Breast epithelium (tissue), 4 donors: ENCODE measurements at regions of chr1 and their contacts with region 1.

Region 1: GRCh38 chr1:13714851-13715250 is 14.9 kb downstream of the PRDM2 start:
- DNase-seq: no peak
- H3K4me3 ChIP-seq: no peak overlapping the region
- H3K27ac ChIP-seq: peak overlapping the region in 1 of 2 donors; percentile 9
- H3K4me1 ChIP-seq: no peaks in the 10 kb centered on the region
- H3K27me3 ChIP-seq: no peaks in the 10 kb centered on the region
- CTCF ChIP-seq: no peak
- POLR2A ChIP-seq: no peak

Region 2: GRCh38 chr1:14782741-14783591 is 1068.1 kb after region 1 on chr1:
- intact Hi-C with region 1: loop called (anchors 5 kb)
- DNase-seq: no peak
- H3K4me3 ChIP-seq: no peak overlapping the region
- H3K27ac ChIP-seq: no peak overlapping the region
- H3K4me1 ChIP-seq: no peaks in the 10 kb centered on the region
- H3K27me3 ChIP-seq: no peaks in the 10 kb centered on the region
- CTCF ChIP-seq: no peak
- POLR2A ChIP-seq: no peak